ENCODE measurements at regions of chr6 and their contacts with region 1.

Region 1: DNA sequence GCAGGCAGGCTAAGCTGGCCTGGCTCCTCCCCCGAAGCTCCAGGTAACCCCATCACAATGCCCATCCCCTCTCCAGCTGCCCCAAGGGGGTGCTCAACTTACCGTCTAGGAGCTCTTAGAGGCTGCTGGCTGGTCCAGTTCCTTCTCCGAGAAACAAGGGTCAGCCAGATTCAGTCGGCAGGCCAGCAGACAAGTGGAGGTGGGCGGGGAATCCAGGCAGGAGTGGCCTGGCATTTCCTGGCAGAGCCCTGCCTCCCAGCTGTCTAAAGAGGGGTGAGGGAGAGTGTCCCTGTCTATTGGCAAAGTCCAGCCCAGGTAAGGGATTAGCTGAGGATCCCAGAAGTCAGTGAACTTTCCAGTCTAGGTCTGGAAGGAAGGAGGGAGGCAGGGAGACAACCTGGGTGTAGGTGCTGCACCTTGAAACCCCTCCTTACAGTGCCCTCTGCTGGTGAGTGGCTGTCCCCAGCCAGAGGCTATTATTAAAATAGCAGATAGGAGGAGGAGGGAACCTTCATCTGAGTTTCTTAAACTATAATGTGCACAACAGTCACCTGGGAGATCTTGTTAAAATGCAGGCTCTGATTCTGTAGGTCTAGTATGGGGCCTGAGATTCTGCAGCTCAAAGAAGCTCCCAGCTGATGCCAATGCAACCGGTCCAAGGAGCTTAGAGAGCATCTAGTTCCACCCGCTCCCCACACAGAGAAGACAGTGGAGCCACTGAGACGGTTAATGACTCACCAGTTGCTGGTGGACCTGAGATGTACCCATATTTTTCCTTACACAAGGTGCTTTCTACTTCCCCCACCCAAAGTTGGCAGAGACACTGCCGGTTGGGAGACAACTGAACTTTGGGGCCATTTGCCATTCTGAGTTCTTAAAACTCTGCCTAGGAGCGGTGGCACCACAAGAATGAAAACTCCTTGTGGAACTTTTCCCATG is at the start of gene UNC5CL:
- DNase-seq: no peak
- ATAC-seq: peak; percentile 92
- H3K4me3 ChIP-seq: no peak within 1 kb of the TSS
- H3K27ac ChIP-seq: no peak within 1 kb of the TSS
- H3K4me1 ChIP-seq: no peaks in the 10 kb centered on the region
- H3K27me3 ChIP-seq: no peaks in the 10 kb centered on the region
- CTCF ChIP-seq: peak; percentile 69 to 84 (median 77)
- EP300 ChIP-seq: no peak
- POLR2A ChIP-seq: no peak
- RAD21 ChIP-seq: peak; percentile 43
- polyA plus RNA-seq, gene UNC5CL: 0.11 TPM in 1 of 2 experiments, not detected in the other

Region 2: GRCh38 chr6:40743226-40743625 is 296.1 kb before region 1 on chr6:
- CTCF ChIA-PET with region 1: no interaction called
- POLR2A ChIA-PET with region 1: no interaction called
- RAD21 ChIA-PET with region 1: no interaction called
- SMC1A ChIA-PET with region 1: no interaction called
- in situ Hi-C with region 1: no loop called
- intact Hi-C with region 1: no loop called
- DNase-seq: no peak
- ATAC-seq: no peak
- H3K4me3 ChIP-seq: no peak overlapping the region
- H3K27ac ChIP-seq: no peak overlapping the region
- H3K4me1 ChIP-seq: no peaks in the 10 kb centered on the region
- H3K27me3 ChIP-seq: no peaks in the 10 kb centered on the region; a peak in 3 of 4 replicates
- CTCF ChIP-seq: no peak
- EP300 ChIP-seq: no peak
- POLR2A ChIP-seq: no peak
- RAD21 ChIP-seq: no peak

Region 3: DNA sequence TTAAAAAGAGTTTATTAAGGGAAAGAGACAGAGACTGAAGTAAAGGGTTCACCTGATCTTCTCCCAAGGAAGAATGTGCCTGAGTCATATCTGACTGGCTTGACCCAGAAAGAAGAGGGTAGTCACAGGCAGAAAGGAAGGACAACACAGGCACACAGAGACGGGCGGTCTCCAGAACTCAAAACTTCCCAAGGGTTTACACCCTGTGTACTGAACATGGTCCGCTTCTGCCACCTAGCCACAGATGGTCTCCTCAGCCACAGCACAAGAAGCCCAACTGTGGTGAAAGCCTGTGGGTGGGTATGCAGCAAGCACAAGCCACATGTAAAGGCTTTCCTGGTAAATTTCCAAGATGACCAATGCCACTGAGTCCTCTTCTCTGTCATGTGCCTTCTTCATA is 17.5 kb before region 1 on chr6:
- CTCF ChIA-PET with region 1: interaction called, 25 read pairs
- POLR2A ChIA-PET with region 1: no interaction called
- RAD21 ChIA-PET with region 1: no interaction called
- SMC1A ChIA-PET with region 1: interaction called, 13 read pairs
- in situ Hi-C with region 1: no loop called
- intact Hi-C with region 1: no loop called
- DNase-seq: no peak
- ATAC-seq: no peak
- H3K4me3 ChIP-seq: no peak overlapping the region
- H3K27ac ChIP-seq: no peak overlapping the region
- H3K4me1 ChIP-seq: no peaks in the 10 kb centered on the region
- H3K27me3 ChIP-seq: no peaks in the 10 kb centered on the region
- CTCF ChIP-seq: 0 out of 6 replicates have a peak, but pooled peaks of 1 of the 3 experiments have one; percentile 0
- EP300 ChIP-seq: no peak
- POLR2A ChIP-seq: no peak
- RAD21 ChIP-seq: no peak

Region 4: GRCh38 chr6:41055149-41055548 is 15.8 kb after region 1 on chr6:
- CTCF ChIA-PET with region 1: interaction called, 11 read pairs
- POLR2A ChIA-PET with region 1: interaction called, 3 read pairs
- RAD21 ChIA-PET with region 1: no interaction called
- SMC1A ChIA-PET with region 1: interaction called, 3 read pairs
- in situ Hi-C with region 1: no loop called
- intact Hi-C with region 1: no loop called
- DNase-seq: no peak
- ATAC-seq: no peak
- H3K4me3 ChIP-seq: no peak overlapping the region
- H3K27ac ChIP-seq: no peak overlapping the region
- H3K4me1 ChIP-seq: no peaks in the 10 kb centered on the region
- H3K27me3 ChIP-seq: no peaks in the 10 kb centered on the region
- CTCF ChIP-seq: no peak
- EP300 ChIP-seq: no peak
- POLR2A ChIP-seq: no peak
- RAD21 ChIP-seq: no peak

Region 5: GRCh38 chr6:41072676-41073623 is 33.6 kb after region 1 on chr6 and contains the start of gene NFYA:
- CTCF ChIA-PET with region 1: interaction called, 62 read pairs
- POLR2A ChIA-PET with region 1: interaction called, 3 read pairs
- RAD21 ChIA-PET with region 1: no interaction called
- SMC1A ChIA-PET with region 1: interaction called, 3 read pairs
- in situ Hi-C with region 1: no loop called
- intact Hi-C with region 1: no loop called
- DNase-seq: no peak
- ATAC-seq: peak; percentile 85
- H3K4me3 ChIP-seq: peak within 1 kb of the TSS; percentile 88
- H3K27ac ChIP-seq: peak within 1 kb of the TSS; percentile 99
- H3K4me1 ChIP-seq: peaks cover 7% of the 10 kb centered on the region; the same call in 1 of the 2 replicates
- H3K27me3 ChIP-seq: no peaks in the 10 kb centered on the region
- CTCF ChIP-seq: peak in 2 of 3 experiments; percentile 32 to 34; a peak in 4 of 6 replicates
- EP300 ChIP-seq: no peak
- POLR2A ChIP-seq: peak; percentile 33
- RAD21 ChIP-seq: no peak
- polyA plus RNA-seq, gene NFYA: 6.4 to 7.3 TPM

Region 6: DNA sequence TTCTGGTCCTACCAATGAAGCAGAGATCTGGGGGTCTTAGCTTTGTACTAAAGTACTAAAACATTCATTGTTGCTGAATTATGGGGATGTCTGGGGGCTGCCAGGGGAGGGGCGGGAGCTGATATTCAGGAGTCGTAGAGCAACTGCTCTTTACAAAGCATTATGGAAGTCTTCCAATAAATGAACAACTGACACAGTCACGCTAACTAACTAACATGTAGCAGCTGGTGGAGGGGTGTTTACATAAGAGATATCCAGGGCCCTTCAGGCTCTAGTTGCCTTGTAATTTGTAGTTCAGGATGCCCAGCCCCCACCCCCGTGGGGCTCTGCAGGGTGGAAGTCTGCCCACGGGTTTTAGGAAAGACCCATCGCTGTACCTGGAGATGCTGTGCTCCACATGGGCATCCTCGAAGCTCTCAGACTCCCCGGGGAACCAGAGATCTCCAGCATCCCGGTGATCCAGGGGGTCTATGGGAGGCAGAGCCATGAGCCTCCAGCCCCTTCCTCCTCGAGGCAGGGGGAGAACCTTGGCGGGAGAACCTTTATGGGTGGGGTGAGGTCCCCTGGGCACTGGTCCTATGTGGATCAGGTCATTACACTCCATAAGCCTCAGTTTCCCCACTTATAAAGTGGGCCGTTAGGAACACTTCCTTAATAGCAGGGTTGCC is 120.2 kb after region 1 on chr6:
- CTCF ChIA-PET with region 1: no interaction called
- POLR2A ChIA-PET with region 1: no interaction called
- RAD21 ChIA-PET with region 1: no interaction called
- SMC1A ChIA-PET with region 1: no interaction called
- in situ Hi-C with region 1: no loop called
- intact Hi-C with region 1: no loop called
- DNase-seq: no peak
- ATAC-seq: no peak
- H3K4me3 ChIP-seq: no peak overlapping the region
- H3K27ac ChIP-seq: no peak overlapping the region
- H3K4me1 ChIP-seq: no peaks in the 10 kb centered on the region
- H3K27me3 ChIP-seq: peaks cover 0 to 2% of the 10 kb centered on the region in 2 experiments; a peak in 1 of 4 replicates
- CTCF ChIP-seq: no peak
- EP300 ChIP-seq: no peak
- POLR2A ChIP-seq: no peak
- RAD21 ChIP-seq: no peak